ENCODE measurements at regions of chr7 and their contacts with region 1.

Region 1: GRCh38 chr7:93690021-93690420 is 115.5 kb upstream of the CALCR start:
- DNase-seq: no peak
- ATAC-seq: no peak
- H3K4me3 ChIP-seq: no peak overlapping the region
- H3K27ac ChIP-seq: no peak overlapping the region
- H3K4me1 ChIP-seq: no peaks in the 10 kb centered on the region
- H3K27me3 ChIP-seq: no peaks in the 10 kb centered on the region
- CTCF ChIP-seq: no peak

Region 2: DNA sequence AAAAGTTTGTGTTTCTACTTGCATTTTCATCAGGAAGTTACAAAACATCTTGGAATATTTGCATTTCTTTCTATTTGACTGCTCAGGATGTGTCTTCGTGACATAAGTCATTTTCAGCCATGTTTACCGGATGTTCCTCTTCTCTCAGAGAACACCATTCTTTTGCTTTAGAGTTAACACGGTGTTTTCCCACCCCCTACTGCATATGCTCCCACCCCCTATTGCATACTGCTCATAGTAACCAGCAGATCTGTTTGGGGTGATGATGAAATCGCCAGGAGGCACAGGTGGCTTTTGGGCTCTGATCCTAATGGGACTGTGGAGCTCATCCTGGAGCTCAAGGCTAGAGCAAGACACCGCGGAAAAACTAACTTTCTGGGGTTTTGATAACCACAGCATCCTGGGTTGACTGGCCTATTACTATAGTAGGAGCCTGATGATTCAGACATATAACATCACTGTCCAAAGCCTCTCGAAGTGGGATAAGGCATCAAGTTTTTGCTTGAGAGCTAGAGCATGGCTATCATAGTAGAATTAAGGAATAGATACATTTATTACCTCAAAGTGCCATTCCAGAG is 379.2 kb after region 1 on chr7:
- intact Hi-C with region 1: loop called in 1 of 3 experiments (anchors 10 kb)
- DNase-seq: no peak
- ATAC-seq: no peak
- H3K4me3 ChIP-seq: no peak overlapping the region
- H3K27ac ChIP-seq: no peak overlapping the region
- H3K4me1 ChIP-seq: no peaks in the 10 kb centered on the region
- H3K27me3 ChIP-seq: no peaks in the 10 kb centered on the region
- CTCF ChIP-seq: no peak

Measured in pancreas (tissue), 10 donors.